Activated B cell treated with CpG ODN at 0.5 μM for 24 hours (primary cell): ENCODE measurements at regions of chr10 and their contacts with region 1.

Region 1: DNA sequence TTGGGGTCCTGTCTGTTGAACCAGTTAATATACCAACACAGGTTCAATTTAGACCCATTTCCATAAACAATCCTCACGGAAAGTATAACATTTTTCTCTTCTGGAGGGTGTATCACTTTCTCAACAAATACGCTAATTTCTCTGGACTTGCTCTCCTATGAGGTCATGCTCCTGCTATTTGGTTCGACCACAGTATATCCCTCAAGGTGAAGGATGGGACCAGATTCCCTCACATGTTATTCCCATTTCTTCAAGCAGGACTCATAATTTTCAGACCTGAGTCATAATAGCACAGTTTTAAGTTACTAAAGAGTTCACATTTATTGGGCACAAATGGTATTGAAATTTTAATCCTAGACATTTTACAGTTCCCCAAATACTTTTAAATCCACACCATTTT is 57.2 kb downstream of the ADAM12 start:
- DNase-seq: no peak
- ATAC-seq: no peak
- H3K4me3 Mint-ChIP-seq: no peak overlapping the region
- H3K27ac Mint-ChIP-seq: no peak overlapping the region
- H3K4me1 Mint-ChIP-seq: no peaks in the 10 kb centered on the region
- H3K27me3 Mint-ChIP-seq: no peaks in the 10 kb centered on the region
- CTCF ChIP-seq: no peak

Region 2: DNA sequence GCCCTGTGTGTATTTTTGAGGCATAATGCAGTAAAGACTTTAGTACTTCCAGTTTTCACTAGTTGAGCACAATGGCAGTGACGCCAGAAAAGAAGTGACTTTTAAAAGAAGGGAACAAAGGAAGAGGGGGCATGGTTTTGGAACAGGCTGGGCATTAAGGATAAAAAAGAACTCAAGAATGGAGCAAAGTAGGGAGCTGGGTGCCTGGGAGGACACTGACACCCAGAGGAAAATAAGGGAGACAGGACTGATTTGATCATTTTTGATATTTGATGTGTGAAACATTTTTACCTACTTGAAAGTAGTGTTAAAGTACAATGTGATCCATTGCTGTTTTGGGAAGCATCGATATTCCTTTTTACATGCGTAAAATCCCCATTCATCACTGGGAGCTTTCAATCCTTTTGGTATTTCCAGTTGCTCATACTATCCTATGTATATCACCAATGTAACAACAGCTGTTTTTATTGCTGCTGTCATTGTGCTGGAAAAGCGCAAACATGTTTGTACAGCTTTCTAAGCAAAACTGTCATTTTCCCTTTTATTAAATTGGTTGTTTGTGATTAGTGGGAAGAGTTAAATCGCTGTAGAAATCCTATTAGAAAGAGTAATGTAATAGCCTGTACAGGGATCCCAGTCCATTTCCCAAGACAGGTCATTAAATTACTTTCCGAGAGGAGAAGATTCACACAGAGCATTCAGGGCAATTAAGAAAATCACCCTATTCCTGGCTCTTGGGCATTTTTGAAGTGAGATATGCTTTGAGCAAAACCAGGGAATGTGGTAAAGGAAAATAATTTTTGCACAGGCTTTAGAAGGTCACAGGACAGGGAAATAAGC is 28.1 kb before region 1 on chr10:
- CTCF ChIA-PET with region 1: no interaction called
- POLR2A ChIA-PET with region 1: no interaction called
- intact Hi-C with region 1: no loop called
- DNase-seq: no peak
- ATAC-seq: no peak
- H3K4me3 Mint-ChIP-seq: no peak overlapping the region
- H3K27ac Mint-ChIP-seq: no peak overlapping the region
- H3K4me1 Mint-ChIP-seq: no peaks in the 10 kb centered on the region
- H3K27me3 Mint-ChIP-seq: no peaks in the 10 kb centered on the region
- CTCF ChIP-seq: no peak

Region 3: GRCh38 chr10:127619546-127620325 is 1288.6 kb after region 1 on chr10:
- CTCF ChIA-PET with region 1: no interaction called
- POLR2A ChIA-PET with region 1: no interaction called
- intact Hi-C with region 1: loop called (anchors 10 kb)
- DNase-seq: no peak
- ATAC-seq: no peak
- H3K4me3 Mint-ChIP-seq: no peak overlapping the region
- H3K27ac Mint-ChIP-seq: no peak overlapping the region
- H3K4me1 Mint-ChIP-seq: no peaks in the 10 kb centered on the region
- H3K27me3 Mint-ChIP-seq: no peaks in the 10 kb centered on the region
- CTCF ChIP-seq: no peak